Transverse colon (tissue), 4 donors: ENCODE measurements at regions of chr17 and their contacts with region 1.

Region 1: GRCh38 chr17:6927290-6928126 is 68.3 kb upstream of the ALOX12 start:
- DNase-seq: no peak
- H3K4me3 ChIP-seq: no peak overlapping the region
- H3K27ac ChIP-seq: no peak overlapping the region
- H3K4me1 ChIP-seq: no peaks in the 10 kb centered on the region
- H3K27me3 ChIP-seq: no peaks in the 10 kb centered on the region
- CTCF ChIP-seq: no peak
- EP300 ChIP-seq: no peak
- POLR2A ChIP-seq: no peak

Region 2: DNA sequence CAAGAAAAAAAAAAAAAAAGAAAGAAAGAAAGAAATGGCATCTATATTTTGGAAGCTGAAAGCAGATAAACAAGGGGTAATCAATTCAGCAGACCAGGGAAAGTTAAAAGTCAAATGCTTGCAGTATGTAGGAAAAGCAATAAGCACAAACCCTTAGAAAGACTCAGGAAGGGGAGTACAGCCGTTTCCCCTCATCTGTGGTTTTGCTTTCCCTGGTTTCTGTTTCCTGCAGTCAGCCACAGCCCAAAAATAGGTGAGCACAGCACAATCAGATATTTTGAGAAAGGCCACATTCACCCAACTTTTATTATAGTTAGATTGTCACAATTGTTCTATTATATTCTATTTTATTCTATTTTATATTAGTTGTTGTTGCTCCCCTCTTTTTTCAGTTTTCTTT is 53.9 kb after region 1 on chr17:
- in situ Hi-C with region 1: loop called in 1 of 4 experiments (anchors 10 kb)
- intact Hi-C with region 1: no loop called
- DNase-seq: no peak
- H3K4me3 ChIP-seq: no peak overlapping the region
- H3K27ac ChIP-seq: no peak overlapping the region
- H3K4me1 ChIP-seq: no peaks in the 10 kb centered on the region
- H3K27me3 ChIP-seq: no peaks in the 10 kb centered on the region
- CTCF ChIP-seq: no peak
- EP300 ChIP-seq: no peak
- POLR2A ChIP-seq: no peak